ENCODE measurements at regions of chr13 and their contacts with region 1.

Region 1: GRCh38 chr13:42102961-42103865 is 54.8 kb downstream of the DGKH start:
- DNase-seq: no peak
- ATAC-seq: no peak

Region 2: GRCh38 chr13:41668130-41668757 is 435.0 kb before region 1 on chr13:
- intact Hi-C with region 1: loop called in 1 of 2 experiments (anchors 10 kb)
- DNase-seq: peak; percentile 31
- ATAC-seq: peak; percentile 96 to 97

Region 3: DNA sequence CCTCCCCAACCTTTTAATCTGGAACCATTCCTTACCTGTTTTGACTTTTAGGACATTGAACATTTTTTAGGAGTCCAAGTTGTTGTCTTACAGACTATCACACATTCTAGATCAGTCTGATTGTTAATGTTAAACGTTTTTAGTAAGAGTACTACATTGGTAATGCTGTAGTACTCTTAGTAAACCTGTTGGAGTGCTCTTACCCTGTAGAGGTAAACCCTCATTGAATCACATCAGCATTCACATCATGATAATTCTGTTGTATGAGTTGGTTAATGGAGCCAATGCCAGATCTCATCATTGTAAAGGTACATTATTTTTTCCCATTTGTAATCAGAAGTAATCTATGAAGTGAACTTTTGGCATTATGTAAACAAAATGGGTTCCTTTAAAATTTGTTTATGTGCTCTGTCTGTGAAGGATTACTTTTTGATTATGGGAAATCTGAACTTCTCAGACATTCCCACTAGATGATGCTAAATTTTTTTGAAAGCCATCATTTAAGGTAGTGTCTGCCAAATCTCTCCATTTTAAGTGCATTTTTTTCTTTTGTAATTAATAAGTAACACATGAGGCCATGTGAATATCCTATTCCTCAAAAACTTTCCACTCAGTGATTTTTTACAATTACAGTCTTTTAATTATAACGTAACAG is 197.5 kb before region 1 on chr13:
- intact Hi-C with region 1: loop called in 1 of 2 experiments (anchors 10 kb)
- DNase-seq: no peak
- ATAC-seq: peak in 1 of 2 donors; percentile 68

Measured in left cardiac atrium (tissue), 4 donors.